OCI-LY7 (cell line): ENCODE measurements at regions of chr6 and their contacts with region 1.

Region 1: GRCh38 chr6:90413867-90414266 is 117.2 kb upstream of the BACH2 start:
- DNase-seq: peak; percentile 87
- H3K4me3 ChIP-seq: peak overlapping the region; percentile 39
- H3K27ac ChIP-seq: no peak overlapping the region
- H3K4me1 ChIP-seq: peaks cover 27% of the 10 kb centered on the region
- CTCF ChIP-seq: no peak

Region 2: DNA sequence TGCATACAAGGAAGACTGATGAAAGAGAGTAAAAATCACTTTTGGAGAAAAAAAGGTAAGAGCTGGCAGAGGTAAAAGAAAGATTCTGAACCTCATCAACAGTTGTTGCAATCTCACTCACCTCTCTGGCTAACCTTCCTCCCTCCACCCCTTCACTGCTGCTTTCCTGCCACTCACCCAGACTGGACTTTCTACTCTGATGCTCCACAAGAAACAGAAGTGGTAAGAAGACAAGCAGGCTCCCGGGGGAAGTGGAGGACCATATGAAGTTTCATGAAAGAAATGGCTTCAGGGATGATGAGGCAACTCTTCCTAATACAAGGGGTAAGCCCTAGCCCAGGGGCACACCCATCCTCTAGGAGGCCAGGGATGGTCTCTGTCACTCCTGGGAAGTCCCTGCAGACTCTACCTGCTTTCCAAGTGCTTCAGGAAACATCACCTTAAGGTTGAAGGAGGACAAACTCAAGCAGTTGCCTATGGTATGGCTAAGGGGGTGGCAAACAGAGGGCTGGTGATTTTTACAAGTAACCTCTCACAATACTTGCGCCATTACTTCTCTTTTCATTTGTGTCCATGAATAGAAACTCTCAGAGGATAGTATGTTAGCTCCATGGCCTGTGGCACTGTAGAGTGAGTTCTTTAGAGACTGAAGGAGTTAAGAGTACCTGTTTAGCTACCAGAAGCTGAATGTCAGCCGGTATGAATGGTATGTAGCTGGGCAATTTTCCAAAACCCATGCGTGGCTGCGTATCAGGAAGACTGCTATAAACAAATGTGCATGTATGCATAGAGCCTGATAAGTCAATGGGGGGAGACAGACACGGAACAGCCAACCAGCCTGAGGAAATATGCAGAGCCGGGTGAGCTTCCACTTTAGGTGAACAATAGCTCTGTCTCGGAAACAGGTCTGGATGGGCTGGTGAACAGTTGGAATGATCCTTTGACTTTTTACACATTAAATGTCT is 229.3 kb before region 1 on chr6:
- CTCF ChIA-PET with region 1: no interaction called
- POLR2A ChIA-PET with region 1: no interaction called
- intact Hi-C with region 1: no loop called
- DNase-seq: no peak
- H3K4me3 ChIP-seq: no peak overlapping the region
- H3K27ac ChIP-seq: no peak overlapping the region
- H3K4me1 ChIP-seq: peaks cover 42% of the 10 kb centered on the region
- CTCF ChIP-seq: no peak

Region 3: DNA sequence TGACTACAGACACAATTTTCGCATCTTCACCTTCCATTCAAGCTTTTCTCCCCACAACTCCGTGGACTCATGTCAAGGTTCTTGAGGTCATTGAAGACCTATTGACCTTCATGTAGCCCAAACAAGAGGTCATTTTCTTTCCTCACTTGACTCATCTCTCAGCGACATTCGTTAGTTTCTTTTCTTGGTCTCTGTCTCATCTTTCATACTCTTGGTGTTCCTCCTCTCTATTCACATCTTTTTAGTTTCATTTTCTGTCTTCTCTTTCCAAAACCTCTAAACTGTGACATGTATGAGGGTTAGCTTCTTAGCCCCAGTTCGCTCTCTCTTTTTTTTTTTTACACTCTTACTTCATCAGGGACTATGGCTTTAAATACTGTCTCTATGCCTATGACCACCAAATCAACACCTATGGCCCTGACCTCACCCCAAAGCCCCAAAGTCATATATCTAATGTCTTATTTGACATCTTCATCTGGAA is 11.3 kb after region 1 on chr6:
- CTCF ChIA-PET with region 1: no interaction called
- POLR2A ChIA-PET with region 1: interaction called, 20 read pairs
- intact Hi-C with region 1: no loop called
- DNase-seq: no peak
- H3K4me3 ChIP-seq: peak overlapping the region; percentile 49
- H3K27ac ChIP-seq: no peak overlapping the region
- H3K4me1 ChIP-seq: peaks cover 17% of the 10 kb centered on the region
- CTCF ChIP-seq: no peak

Region 4: GRCh38 chr6:90701146-90701781 is 287.4 kb after region 1 on chr6:
- CTCF ChIA-PET with region 1: no interaction called
- POLR2A ChIA-PET with region 1: no interaction called
- intact Hi-C with region 1: no loop called
- DNase-seq: peak; percentile 70
- H3K4me3 ChIP-seq: no peak overlapping the region
- H3K27ac ChIP-seq: no peak overlapping the region
- H3K4me1 ChIP-seq: peaks cover 13% of the 10 kb centered on the region
- CTCF ChIP-seq: peak; percentile 38; the same call in 1 of the 2 replicates